ENCODE measurements at regions of chr1 and their contacts with region 1.

Region 1: GRCh38 chr1:183812686-183813569 is 8.0 kb downstream of the RGL1 start:
- DNase-seq: no peak
- H3K4me3 ChIP-seq: no peak overlapping the region
- H3K27ac ChIP-seq: peak overlapping the region in 5 of 8 donors; percentile 33 to 74 (median 40)
- H3K4me1 ChIP-seq: peaks cover 4 to 94% (median 38%) of the 10 kb centered on the region in 6 donors
- H3K27me3 ChIP-seq: no peaks in the 10 kb centered on the region
- CTCF ChIP-seq: no peak
- POLR2A ChIP-seq: no peak

Region 2: GRCh38 chr1:183871142-183871541 is 58.2 kb after region 1 on chr1:
- intact Hi-C with region 1: no loop called
- DNase-seq: no peak
- H3K4me3 ChIP-seq: no peak overlapping the region
- H3K27ac ChIP-seq: peak overlapping the region in 7 of 8 donors; percentile 45 to 81 (median 75)
- H3K4me1 ChIP-seq: peaks cover 18 to 71% (median 57%) of the 10 kb centered on the region in 6 donors
- H3K27me3 ChIP-seq: no peaks in the 10 kb centered on the region
- CTCF ChIP-seq: no peak
- POLR2A ChIP-seq: no peak

Region 3: GRCh38 chr1:183881387-183882131 is 68.6 kb after region 1 on chr1:
- intact Hi-C with region 1: loop called (anchors 10 kb)
- DNase-seq: no peak
- H3K4me3 ChIP-seq: no peak overlapping the region
- H3K27ac ChIP-seq: peak overlapping the region in 7 of 8 donors; percentile 0 to 72 (median 59)
- H3K4me1 ChIP-seq: peaks cover 12 to 83% (median 41%) of the 10 kb centered on the region in 6 donors
- H3K27me3 ChIP-seq: no peaks in the 10 kb centered on the region
- CTCF ChIP-seq: no peak
- POLR2A ChIP-seq: no peak